MCF 10A (cell line): ENCODE measurements at regions of chrX and their contacts with region 1.

Region 1: DNA sequence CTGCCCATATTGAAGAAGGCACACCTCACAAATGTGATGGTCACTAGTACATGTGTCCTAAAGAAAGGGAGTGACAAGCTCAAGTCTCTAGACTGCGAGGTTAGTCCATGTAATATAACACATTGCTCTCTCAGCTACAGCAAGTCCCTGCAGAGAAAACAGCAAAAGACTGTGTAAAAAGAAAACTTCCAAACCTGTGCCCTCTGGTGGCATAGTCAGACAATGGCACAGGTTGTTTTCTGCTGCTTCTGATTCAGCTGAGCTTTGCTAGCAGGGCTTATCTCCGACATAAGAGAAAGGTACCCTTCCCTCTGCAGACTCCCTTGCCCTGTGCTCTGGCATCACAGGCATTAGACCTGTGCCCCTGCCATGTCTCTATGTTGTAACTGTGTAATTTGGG is 1.4 kb upstream of the SERPINA7 start:
- DNase-seq: peak; percentile 52
- H3K4me3 Mint-ChIP-seq: no peak overlapping the region
- H3K27ac Mint-ChIP-seq: no peak overlapping the region
- H3K4me1 Mint-ChIP-seq: no peaks in the 10 kb centered on the region
- H3K27me3 Mint-ChIP-seq: peaks cover 70% of the 10 kb centered on the region
- CTCF ChIP-seq: peak; percentile 43

Region 2: DNA sequence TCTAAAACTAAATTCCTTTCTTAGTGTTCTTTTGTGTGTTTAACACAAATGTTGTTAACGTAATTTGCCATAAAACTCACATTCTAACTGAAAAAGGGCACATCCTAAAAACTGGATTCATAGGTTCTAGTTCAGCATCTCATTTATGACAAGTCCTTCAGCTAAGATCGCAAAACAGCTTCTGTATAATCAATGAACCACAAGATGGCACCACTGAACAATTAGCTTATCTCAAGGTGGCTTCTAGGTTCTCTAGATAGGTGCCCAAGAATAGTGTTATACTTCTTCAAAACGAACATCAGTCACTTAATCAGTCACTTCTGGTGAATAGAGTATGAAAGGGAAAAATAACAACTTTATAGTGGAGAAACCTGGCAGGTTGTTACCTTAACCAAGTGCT is 163.3 kb before region 1 on chrX:
- CTCF ChIA-PET with region 1: interaction called, 5 read pairs
- POLR2A ChIA-PET with region 1: no interaction called
- intact Hi-C with region 1: loop called (anchors 10 kb)
- DNase-seq: peak; percentile 57
- H3K4me3 Mint-ChIP-seq: no peak overlapping the region
- H3K27ac Mint-ChIP-seq: no peak overlapping the region
- H3K4me1 Mint-ChIP-seq: no peaks in the 10 kb centered on the region
- H3K27me3 Mint-ChIP-seq: peaks cover 61% of the 10 kb centered on the region
- CTCF ChIP-seq: peak; percentile 36

Region 3: DNA sequence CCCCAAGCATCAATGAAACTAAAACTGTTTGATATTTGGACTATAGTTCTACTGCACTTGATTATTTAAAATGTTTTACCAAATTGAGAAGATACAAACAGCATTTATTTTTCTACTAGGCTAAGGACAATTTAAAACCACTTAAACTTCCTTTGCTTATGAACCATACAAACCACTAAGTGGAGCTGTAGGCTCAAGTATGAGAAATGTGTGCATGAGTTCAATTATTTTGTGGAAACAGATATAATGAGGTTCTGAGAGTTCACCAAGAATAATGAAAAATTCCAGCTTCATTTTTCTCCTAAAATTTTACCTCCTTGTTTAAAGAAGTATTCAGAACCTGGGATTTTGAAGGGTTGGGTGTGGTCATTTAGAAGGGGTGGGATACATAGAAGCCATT is 64.5 kb before region 1 on chrX:
- CTCF ChIA-PET with region 1: interaction called, 11 read pairs
- POLR2A ChIA-PET with region 1: no interaction called
- intact Hi-C with region 1: loop called (anchors 1 kb)
- DNase-seq: peak; percentile 48
- H3K4me3 Mint-ChIP-seq: no peak overlapping the region
- H3K27ac Mint-ChIP-seq: no peak overlapping the region
- H3K4me1 Mint-ChIP-seq: peaks cover 11% of the 10 kb centered on the region
- H3K27me3 Mint-ChIP-seq: peaks cover 65% of the 10 kb centered on the region
- CTCF ChIP-seq: peak; percentile 40

Region 4: DNA sequence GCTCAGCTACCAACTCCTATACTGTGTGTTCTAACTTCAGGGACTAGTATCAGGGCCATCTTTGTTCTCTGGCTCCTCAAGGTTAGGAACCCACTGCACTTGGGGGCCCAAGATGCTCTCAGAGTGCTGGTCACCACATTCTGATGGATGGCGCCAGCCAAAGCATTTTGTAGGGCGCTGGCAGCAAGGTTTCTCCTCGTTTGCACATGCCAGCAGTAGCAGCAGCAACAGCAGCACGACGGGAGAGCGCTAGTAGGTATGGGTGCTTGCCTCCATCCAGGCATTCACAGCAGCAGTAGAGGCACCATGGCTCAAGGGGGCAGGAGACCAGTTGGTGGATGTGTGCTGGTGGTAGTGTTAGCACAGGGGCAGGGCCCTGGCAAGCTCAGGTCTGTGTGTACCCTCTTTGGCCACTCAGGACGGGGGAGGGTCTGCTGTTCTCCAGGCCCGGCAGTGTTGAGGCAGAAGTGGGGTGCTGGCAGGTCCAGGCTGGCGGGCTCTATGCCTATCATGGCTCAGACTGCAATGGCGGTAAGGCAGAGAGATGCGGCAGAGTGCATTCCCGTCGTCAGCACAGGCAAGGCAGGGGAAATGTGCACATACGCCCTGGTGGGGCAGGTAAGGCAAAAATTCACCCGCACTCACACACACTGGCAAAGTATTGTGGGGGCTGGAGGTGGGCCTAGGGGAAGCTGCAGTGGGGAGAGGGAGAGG is 58.0 kb before region 1 on chrX:
- CTCF ChIA-PET with region 1: interaction called, 10 read pairs
- POLR2A ChIA-PET with region 1: no interaction called
- intact Hi-C with region 1: no loop called
- DNase-seq: no peak
- H3K4me3 Mint-ChIP-seq: no peak overlapping the region
- H3K27ac Mint-ChIP-seq: no peak overlapping the region
- H3K4me1 Mint-ChIP-seq: no peaks in the 10 kb centered on the region
- H3K27me3 Mint-ChIP-seq: peaks cover 63% of the 10 kb centered on the region
- CTCF ChIP-seq: no peak

Region 5: GRCh38 chrX:106397801-106398538 is 358.1 kb after region 1 on chrX:
- CTCF ChIA-PET with region 1: interaction called, 5 read pairs
- POLR2A ChIA-PET with region 1: no interaction called
- intact Hi-C with region 1: loop called (anchors 5 kb)
- DNase-seq: peak; percentile 38
- H3K4me3 Mint-ChIP-seq: no peak overlapping the region
- H3K27ac Mint-ChIP-seq: no peak overlapping the region
- H3K4me1 Mint-ChIP-seq: no peaks in the 10 kb centered on the region
- H3K27me3 Mint-ChIP-seq: peaks cover 33% of the 10 kb centered on the region
- CTCF ChIP-seq: peak; percentile 42